ENCODE measurements at regions of chr19 and their contacts with region 1.

Region 1: GRCh38 chr19:35140962-35141637 is 2.0 kb upstream of the FXYD7 start:
- DNase-seq: peak; percentile 77 to 96
- H3K4me3 ChIP-seq: peak overlapping the region; percentile 52 to 66
- H3K27ac ChIP-seq: peak overlapping the region; percentile 94 to 96
- H3K4me1 ChIP-seq: peaks cover 12 to 31% of the 10 kb centered on the region in 2 donors
- H3K27me3 ChIP-seq: no peaks in the 10 kb centered on the region
- CTCF ChIP-seq: peak; percentile 27 to 75 (median 45)

Region 2: DNA sequence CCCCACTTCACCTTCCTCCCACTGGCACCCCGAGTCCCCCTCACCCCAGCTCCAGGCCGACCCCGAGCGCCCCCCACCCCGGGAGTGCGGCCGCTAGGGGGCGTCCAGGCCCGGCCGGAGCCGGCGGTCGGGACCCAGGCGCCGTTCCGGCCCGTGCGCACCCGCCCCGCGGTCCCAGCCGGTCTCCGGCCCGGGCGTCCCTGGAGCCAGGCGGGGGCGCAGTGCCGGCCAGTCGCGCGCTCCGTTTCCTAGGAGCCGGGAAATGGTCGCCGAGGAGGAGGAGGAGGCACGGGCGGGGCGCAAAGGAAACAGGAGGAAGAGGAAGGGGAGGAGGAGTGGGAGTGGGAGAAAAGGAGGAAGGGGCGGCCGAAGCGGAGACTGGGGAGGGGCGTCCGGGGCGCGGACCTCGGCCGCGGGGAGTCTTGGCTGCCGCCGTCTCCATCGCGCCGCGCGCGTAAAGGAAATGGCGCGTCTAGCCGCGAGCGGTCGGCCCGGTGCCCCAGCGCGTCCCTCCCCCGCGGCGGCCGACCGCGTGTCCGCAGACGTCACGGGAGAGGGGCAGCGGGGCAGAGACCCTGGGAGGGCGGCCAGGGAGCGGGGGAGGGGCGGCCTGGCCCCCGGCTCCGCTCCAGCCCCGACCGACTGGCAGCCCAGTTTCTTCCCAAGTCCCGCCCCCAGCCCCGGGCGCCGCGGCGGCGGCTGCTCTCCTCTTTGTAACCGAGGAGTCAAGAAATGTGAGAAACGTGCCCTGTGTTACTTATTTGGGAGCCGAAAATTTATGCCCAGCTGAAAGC is 1345.5 kb before region 1 on chr19:
- intact Hi-C with region 1: loop called (anchors 10 kb)
- DNase-seq: peak in 1 of 2 donors; percentile 88
- H3K4me3 ChIP-seq: peak overlapping the region; percentile 77 to 93
- H3K27ac ChIP-seq: peak overlapping the region; percentile 93 to 96
- H3K4me1 ChIP-seq: peaks cover 4 to 6% of the 10 kb centered on the region in 2 donors
- H3K27me3 ChIP-seq: no peaks in the 10 kb centered on the region
- CTCF ChIP-seq: peak; percentile 69 to 83 (median 77)

Region 3: GRCh38 chr19:34999498-35000341 is 141.4 kb before region 1 on chr19 and contains the start of gene GRAMD1A:
- intact Hi-C with region 1: loop called (anchors 2 kb)
- DNase-seq: peak; percentile 84 to 93
- H3K4me3 ChIP-seq: peak within 1 kb of the TSS; percentile 94 to 99
- H3K27ac ChIP-seq: peak within 1 kb of the TSS; percentile 95 to 100
- H3K4me1 ChIP-seq: peaks cover 9 to 22% of the 10 kb centered on the region in 2 donors
- H3K27me3 ChIP-seq: no peaks in the 10 kb centered on the region
- CTCF ChIP-seq: no peak
- total RNA-seq, gene GRAMD1A: 103 TPM

Region 4: DNA sequence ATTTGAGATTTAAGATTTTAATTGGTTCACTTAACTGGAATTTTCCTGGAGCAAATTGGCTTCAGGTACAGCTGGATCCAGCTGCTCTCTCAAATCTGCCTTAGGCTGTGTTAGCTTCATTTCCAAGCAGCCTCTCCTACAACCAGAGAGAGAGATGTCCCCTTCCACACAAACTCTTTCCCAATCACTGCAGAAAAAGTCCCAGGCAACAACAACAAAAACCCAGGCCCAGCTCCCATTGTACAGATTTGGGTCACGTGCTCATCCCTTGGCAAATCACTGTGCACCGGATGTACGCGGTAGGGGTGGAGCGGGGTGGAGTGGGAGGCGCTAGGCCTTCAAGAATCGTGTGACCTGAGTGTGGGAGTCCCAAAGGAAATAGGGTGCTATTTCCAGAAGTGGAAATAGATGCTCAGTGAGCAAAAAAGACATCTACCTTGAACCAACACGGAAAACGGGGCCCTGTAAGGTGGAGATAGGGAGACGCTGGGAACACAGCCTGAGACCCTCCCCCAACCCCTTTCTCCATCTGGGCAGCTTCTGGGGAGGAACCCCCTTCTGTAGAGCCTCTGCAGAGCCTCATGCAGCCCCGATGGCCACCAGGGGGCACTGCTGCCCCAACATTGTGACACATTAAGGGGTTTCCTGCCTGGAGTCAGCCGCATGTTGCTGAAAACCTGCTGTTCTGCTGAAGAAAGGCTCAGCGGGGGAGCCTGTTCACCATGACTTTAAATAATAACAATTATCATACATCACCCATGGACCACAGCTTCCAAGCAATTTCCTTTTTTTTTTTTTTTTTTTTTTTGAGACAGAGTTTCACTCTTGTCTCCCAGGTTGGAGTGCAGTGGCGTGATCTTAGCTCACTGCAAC is 74.2 kb before region 1 on chr19:
- intact Hi-C with region 1: loop called (anchors 1 kb)
- DNase-seq: peak; percentile 39 to 88
- H3K4me3 ChIP-seq: no peak overlapping the region
- H3K27ac ChIP-seq: no peak overlapping the region
- H3K4me1 ChIP-seq: no peaks in the 10 kb centered on the region
- H3K27me3 ChIP-seq: no peaks in the 10 kb centered on the region
- CTCF ChIP-seq: peak; percentile 75 to 84 (median 80)

Region 5: GRCh38 chr19:35124098-35125060 is 16.7 kb before region 1 on chr19:
- intact Hi-C with region 1: loop called (anchors 1 kb)
- DNase-seq: peak; percentile 80 to 96
- H3K4me3 ChIP-seq: peak overlapping the region; percentile 56 to 64
- H3K27ac ChIP-seq: peak overlapping the region; percentile 80 to 85
- H3K4me1 ChIP-seq: peaks cover 8 to 13% of the 10 kb centered on the region in 2 donors
- H3K27me3 ChIP-seq: no peaks in the 10 kb centered on the region
- CTCF ChIP-seq: no peak

Region 6: GRCh38 chr19:35154525-35155406 is 13.7 kb after region 1 on chr19 and contains the start of gene FXYD5:
- intact Hi-C with region 1: loop called (anchors 1 kb)
- DNase-seq: peak; percentile 48 to 85
- H3K4me3 ChIP-seq: peak within 1 kb of the TSS; percentile 52 to 88
- H3K27ac ChIP-seq: peak within 1 kb of the TSS; percentile 62 to 69
- H3K4me1 ChIP-seq: peaks cover 11 to 15% of the 10 kb centered on the region in 2 donors
- H3K27me3 ChIP-seq: no peaks in the 10 kb centered on the region
- CTCF ChIP-seq: no peak
- total RNA-seq, gene FXYD5: 138 TPM

Region 7: GRCh38 chr19:35449053-35449687 is 308.1 kb after region 1 on chr19:
- intact Hi-C with region 1: no loop called
- DNase-seq: no peak
- H3K4me3 ChIP-seq: no peak overlapping the region
- H3K27ac ChIP-seq: no peak overlapping the region
- H3K4me1 ChIP-seq: no peaks in the 10 kb centered on the region
- H3K27me3 ChIP-seq: no peaks in the 10 kb centered on the region
- CTCF ChIP-seq: no peak

Region 8: GRCh38 chr19:35740423-35741202 is 599.5 kb after region 1 on chr19:
- intact Hi-C with region 1: loop called (anchors 10 kb)
- DNase-seq: peak; percentile 94 to 99
- H3K4me3 ChIP-seq: peak overlapping the region; percentile 56 to 70
- H3K27ac ChIP-seq: peak overlapping the region; percentile 81 to 85
- H3K4me1 ChIP-seq: peaks cover 10 to 18% of the 10 kb centered on the region in 2 donors
- H3K27me3 ChIP-seq: no peaks in the 10 kb centered on the region
- CTCF ChIP-seq: peak; percentile 12 to 22 (median 18)

Measured in ascending aorta (tissue), 2 donors.